Right ventricle myocardium inferior (tissue), 1 donor: ENCODE measurements at regions of chr18 and their contacts with region 1.

Region 1: DNA sequence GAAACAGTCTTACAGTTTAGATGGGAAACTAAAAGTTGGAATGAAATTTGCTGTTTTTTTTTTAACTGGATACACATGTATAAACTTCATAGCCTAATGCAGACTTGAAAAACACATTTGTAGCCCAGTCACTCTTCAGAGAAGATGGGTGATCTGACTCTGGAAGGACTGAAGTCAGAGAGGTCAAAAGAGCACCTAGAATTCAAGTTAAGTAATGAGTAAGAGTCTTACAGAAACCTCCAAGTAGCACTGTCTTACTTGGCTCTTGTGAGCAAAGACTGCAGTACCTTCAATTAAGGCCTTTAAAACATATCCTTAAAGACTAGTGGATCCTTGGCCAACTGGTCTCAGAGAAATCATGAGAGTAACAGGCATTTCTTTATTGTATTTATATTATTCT is 41.9 kb downstream of the TRAPPC8 start:
- DNase-seq: no peak
- ATAC-seq: no peak

Region 2: GRCh38 chr18:31526374-31526773 is 374.7 kb before region 1 on chr18:
- intact Hi-C with region 1: no loop called
- DNase-seq: no peak
- ATAC-seq: no peak

Region 3: DNA sequence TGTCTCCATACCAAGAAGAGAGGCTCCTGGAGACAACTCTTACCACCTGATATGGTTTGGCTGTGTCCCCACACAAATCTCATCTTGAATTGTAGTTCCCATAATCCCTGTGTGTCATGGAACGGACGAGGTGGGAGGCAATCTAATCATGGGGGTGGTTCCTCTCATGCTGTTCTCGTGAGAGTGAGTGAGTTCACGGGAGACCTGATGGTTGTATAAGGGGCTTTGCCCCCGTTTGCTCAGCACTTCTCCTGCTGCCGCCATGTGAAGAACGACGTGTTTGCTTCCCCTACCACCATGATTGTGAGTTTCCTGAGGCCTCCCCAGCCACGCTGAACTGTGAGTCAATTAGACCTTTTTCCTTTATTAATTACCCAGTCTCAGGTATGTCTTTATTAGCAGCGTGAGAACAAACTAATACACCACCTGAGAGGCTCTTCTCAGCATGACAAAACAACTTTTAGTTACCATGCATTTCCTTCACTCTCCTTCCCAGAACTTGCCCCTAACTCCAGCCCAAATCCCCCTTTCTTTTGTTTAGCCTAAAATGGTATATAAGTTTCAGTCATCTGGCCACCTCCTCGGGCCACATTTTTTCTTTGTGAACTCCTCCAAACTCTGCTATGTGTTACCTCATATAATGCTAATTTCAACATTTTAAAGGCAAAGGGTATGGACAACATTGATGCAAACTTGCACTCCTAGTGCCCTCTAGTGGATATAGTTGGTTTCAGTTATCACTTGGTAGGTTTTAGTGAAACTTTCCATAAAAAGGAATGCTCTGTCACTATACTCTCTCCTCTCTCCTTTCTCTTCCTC is 81.7 kb before region 1 on chr18:
- intact Hi-C with region 1: loop called (anchors 10 kb)
- DNase-seq: no peak
- ATAC-seq: no peak

Region 4: GRCh38 chr18:31860488-31860887 is 40.6 kb before region 1 on chr18:
- intact Hi-C with region 1: loop called (anchors 5 kb)
- DNase-seq: no peak
- ATAC-seq: no peak